Right ventricle myocardium inferior (tissue), 1 donor: ENCODE measurements at regions of chr3 and their contacts with region 1.

Region 1: DNA sequence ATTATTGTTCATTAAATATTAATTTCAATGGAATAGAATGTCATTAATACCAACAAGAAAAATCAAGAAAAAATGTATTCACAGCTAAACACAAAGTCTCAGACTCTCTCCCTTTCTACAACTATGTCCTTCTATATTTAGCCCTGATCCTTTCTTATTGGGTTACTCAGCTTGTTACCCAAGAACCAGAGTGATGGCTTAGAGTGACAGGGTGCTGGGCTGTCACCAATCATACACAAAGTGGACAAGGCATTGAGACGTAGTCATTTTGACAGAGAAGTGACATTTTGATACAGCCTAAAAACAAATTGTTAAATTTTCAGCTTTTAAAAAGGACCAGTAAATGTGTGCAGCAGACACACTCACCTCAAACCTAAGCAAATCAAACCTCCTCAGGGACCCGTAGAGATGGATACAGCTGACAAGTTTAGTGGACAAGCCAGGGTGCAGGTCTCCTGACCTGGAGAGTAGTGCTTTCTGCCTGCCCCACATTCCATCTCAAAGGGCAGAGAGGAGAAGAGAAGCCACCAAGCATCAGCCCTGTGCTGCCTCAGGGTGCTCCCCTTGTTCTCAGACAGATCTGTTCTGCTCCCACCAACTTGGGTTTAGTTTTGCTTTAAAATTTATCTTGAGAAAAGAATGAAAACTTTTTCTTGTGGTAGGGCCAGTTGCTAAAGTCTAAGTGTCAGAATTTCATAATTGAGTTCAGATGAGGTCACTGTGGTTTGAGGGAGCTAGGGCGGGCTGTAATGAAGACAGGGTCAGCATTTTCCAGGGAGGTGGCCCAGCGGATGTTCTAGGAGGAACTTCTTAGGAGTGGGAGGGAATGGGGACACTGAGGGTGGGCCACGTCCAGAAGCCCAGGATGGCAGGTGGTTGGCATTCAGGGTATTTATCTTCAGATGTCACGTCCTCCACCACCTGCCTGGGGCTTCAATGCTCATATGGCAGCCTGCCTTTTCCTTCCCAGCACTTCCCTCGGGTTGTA is 136.5 kb upstream of the TBL1XR1 start:
- DNase-seq: no peak
- ATAC-seq: peak; percentile 63

Region 2: GRCh38 chr3:177144923-177145780 is 188.7 kb before region 1 on chr3:
- intact Hi-C with region 1: no loop called
- DNase-seq: no peak
- ATAC-seq: no peak

Region 3: GRCh38 chr3:177345049-177345972 is 11.5 kb after region 1 on chr3:
- intact Hi-C with region 1: loop called (anchors 2 kb)
- DNase-seq: peak; percentile 89
- ATAC-seq: peak; percentile 97